ENCODE measurements at regions of chr3 and their contacts with region 1.

Region 1: GRCh38 chr3:64763980-64764379 is 76.2 kb upstream of the ADAMTS9 start:
- DNase-seq: no peak
- ATAC-seq: no peak
- H3K4me3 ChIP-seq: no peak overlapping the region
- H3K27ac ChIP-seq: peak overlapping the region in 1 of 4 donors; percentile 31
- H3K4me1 ChIP-seq: peaks cover 19 to 25% of the 10 kb centered on the region in 2 donors
- H3K27me3 ChIP-seq: no peaks in the 10 kb centered on the region
- CTCF ChIP-seq: peak in 1 of 5 experiments; percentile 16
- POLR2A ChIP-seq: no peak

Region 2: DNA sequence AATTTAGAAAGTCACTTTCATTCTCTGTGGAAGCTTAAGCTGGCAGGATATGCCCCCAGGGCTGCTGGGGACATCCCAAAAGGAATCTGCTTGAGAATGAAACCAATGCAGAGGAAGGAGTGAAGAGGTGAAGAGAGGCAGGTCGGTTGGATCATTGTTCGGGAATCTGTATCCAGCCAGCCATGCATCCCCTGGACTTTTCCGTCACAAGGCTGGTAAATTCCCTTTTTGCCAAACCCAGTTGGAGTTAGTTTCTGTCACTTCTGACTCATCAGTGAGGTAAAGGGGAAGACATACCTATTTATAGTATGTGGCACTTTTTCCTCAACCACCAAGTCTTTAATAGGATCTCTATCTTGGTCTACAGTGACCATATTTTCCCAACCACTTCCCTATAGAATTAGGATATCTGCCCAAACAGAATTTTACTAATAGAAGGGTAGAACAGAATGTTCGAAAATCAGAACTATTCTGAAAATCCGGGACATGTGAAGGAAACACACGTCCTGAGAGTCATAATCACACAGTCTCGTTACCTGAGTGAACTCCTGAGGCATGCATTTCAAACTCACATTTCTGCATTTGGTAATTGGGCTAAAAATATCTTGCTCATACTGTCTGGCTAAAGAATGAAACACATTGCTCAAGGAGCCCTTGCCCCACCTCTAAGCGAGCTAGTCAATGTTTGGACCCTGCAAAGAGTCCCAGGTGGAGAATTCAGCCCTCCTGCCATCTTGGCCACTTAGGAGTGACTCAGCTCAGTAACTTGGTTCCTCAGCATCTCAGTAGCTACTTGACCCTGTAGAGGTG is 213.5 kb after region 1 on chr3:
- in situ Hi-C with region 1: no loop called
- intact Hi-C with region 1: loop called (anchors 5 kb)
- DNase-seq: no peak
- ATAC-seq: no peak
- H3K4me3 ChIP-seq: no peak overlapping the region
- H3K27ac ChIP-seq: peak overlapping the region in 1 of 4 donors; percentile 33
- H3K4me1 ChIP-seq: peaks cover 0 to 7% of the 10 kb centered on the region in 2 donors
- H3K27me3 ChIP-seq: no peaks in the 10 kb centered on the region
- CTCF ChIP-seq: no peak
- POLR2A ChIP-seq: no peak

Measured in gastrocnemius medialis (tissue), 4 donors.